MCF 10A (cell line): ENCODE measurements at regions of chr6 and their contacts with region 1.

Region 1: DNA sequence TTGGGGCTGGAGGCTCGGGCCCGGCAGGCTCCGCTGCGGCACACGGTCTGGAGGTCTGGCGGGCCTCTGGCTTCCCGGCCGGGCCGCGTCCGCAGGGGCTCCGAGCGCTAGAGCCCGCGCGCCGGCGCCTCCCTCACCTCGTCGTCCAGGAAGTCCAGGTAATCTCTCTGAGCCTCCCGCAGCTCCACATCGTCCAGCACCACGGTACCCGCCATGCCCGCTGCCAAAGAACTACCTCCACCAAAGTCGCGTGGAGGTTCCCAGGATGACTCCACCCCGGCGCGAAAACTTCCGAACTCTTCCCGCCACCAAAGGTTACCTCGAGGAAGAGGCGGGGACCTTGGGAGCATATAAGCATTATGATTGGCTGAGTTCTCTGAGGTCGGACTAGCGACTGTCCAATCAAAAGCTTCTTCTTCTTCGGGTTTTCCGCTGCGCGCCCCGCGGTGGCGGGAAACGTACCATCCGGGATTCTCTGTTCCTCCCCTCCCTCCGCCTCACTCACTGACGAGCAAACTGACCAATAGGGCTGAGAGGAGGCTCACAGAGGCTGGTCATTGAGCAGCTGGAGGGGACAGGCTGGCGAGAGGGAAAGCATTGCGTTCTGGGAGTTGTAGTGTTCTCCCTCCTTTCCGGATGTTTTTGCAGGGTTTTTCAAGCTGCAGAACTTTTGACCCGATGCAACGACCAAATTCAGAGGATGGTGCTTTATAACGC is at the start of gene MCM3:
- DNase-seq: peak; percentile 99
- H3K4me3 Mint-ChIP-seq: no peak within 1 kb of the TSS
- H3K27ac Mint-ChIP-seq: peak within 1 kb of the TSS; percentile 43
- H3K4me1 Mint-ChIP-seq: peaks cover 12% of the 10 kb centered on the region
- H3K27me3 Mint-ChIP-seq: no peaks in the 10 kb centered on the region
- CTCF ChIP-seq: no peak
- total RNA-seq, gene MCM3: 16.3 and 24.9 TPM in 2 replicates

Region 2: DNA sequence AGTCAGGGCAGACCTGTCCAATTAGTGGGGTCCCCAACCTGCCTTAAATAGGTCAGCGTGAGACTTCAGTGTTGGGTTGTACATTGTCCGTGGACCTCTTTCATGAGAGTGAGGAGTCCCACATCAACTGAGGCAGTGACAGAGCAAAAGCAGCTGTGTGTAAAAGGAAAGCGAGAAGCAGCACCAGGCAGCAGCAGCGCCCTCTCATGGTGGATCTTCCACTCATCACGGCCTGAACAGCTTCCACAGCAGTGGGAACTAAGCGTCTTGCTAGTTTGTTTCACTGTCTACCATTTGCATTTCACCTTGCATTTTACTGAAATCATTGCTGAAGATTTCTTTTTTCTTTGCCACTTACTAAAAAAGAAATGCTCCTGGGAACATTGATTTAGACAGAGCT is 531.0 kb before region 1 on chr6:
- CTCF ChIA-PET with region 1: no interaction called
- POLR2A ChIA-PET with region 1: no interaction called
- intact Hi-C with region 1: no loop called
- DNase-seq: peak; percentile 39
- H3K4me3 Mint-ChIP-seq: no peak overlapping the region
- H3K27ac Mint-ChIP-seq: no peak overlapping the region
- H3K4me1 Mint-ChIP-seq: no peaks in the 10 kb centered on the region
- H3K27me3 Mint-ChIP-seq: no peaks in the 10 kb centered on the region
- CTCF ChIP-seq: peak; percentile 28

Region 3: DNA sequence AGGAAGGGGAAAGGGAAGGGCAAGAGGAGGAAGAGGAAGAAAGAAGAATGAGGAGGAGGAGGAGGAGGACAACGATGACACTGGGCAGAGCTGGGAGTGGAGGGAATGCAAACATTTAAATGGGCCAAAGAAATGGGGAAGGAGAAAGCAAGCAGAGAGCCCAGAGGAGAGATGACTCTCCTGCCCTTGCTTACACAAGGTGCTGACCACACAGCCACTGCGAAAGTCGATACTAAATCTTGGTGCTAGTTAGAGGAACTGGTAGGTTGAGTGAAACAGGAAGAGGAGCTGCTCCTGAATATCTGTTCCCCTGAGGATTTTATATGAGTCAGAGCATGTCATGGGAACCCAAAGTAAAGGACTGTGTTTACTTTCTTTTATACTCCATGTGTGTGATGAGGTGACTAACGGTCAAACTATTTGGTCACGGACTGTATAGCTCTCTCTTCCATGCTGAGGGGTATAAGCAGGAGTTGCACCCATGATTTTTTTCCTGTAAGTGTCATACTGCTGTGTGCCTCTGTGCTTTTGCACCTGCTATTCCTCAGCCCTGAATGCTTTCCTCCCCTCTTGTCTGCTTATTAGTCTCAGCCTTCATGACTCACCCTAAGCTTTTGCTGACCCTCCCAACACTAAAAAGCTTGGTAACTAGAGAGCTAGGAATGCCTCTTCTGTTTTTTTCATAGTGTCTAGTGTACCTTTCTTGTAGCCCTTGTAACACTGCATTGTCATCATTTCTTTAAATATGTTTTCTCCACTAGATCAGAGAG is 67.8 kb after region 1 on chr6:
- CTCF ChIA-PET with region 1: interaction called, 4 read pairs
- POLR2A ChIA-PET with region 1: interaction called, 21 read pairs
- intact Hi-C with region 1: loop called (anchors 2 kb)
- DNase-seq: peak; percentile 95
- H3K4me3 Mint-ChIP-seq: peak overlapping the region; percentile 58
- H3K27ac Mint-ChIP-seq: peak overlapping the region; percentile 97
- H3K4me1 Mint-ChIP-seq: peaks cover 16% of the 10 kb centered on the region
- H3K27me3 Mint-ChIP-seq: no peaks in the 10 kb centered on the region
- CTCF ChIP-seq: no peak

Region 4: DNA sequence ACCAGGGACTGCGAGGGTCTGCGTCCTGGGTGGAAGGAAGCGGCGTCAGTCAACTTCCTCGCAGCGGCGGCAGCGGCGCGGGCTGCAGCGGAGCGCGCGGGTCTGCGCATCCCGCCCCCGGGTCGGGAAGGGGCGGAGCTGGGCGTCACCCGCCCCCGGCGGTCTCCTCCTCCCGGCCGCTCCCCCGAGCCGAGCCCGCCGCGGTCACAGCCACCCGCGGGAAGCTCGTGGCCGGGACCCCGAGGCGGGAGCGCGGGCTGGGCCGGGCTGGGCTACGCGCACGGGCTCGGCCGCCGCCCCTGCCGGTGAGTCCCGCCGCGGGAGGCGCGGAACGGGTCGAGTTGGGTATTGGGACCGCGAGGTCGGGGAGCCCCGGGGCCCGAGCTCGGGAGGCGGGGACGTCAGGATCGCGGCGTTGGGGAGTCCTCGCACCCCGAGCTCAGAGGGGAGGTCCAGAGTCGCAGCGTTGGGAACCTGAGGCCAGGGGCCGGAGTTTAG is 77.4 kb after region 1 on chr6 and contains the start of gene PAQR8:
- CTCF ChIA-PET with region 1: interaction called, 12 read pairs
- POLR2A ChIA-PET with region 1: interaction called, 7 read pairs
- intact Hi-C with region 1: loop called (anchors 1 kb)
- DNase-seq: peak; percentile 23
- H3K4me3 Mint-ChIP-seq: peak within 1 kb of the TSS; percentile 96
- H3K27ac Mint-ChIP-seq: peak within 1 kb of the TSS; percentile 77
- H3K4me1 Mint-ChIP-seq: peaks cover 16% of the 10 kb centered on the region
- H3K27me3 Mint-ChIP-seq: no peaks in the 10 kb centered on the region
- CTCF ChIP-seq: no peak
- total RNA-seq, gene PAQR8: 1.8 and 1.9 TPM in 2 replicates

Region 5: DNA sequence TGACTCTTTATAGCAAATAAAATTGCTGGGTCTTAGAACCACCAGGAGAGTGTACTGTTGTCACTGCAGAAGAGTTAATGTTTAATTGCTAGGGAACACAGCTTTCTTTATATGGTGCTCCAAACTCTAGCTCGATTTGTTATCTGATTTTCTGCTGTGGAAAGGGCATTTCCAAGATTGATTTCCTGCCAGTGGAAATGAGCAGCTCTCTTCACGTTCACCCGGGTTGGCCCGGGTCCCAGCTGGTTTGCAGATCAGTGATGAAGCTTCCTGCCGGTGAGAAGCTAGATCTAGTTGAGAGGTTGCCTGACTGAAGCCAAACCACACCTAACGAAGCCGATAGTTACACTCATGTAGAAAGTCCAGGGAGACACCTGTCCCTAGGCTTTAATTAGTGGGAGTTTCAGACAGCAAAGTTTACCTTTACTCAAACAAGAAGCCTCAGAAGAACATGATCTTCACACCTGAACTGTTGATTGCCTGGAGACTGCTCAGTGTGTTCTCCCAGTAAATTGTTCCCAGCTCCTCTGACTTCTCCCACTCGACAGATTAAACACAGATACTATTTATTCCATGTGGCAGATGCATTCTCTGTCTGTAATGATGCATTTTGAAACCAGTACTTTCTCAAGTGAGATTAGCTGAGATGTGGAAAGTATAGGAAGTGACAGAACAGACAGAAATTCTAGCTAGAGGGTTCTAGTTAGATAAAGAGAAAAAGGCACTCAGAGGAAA is 105.2 kb after region 1 on chr6:
- CTCF ChIA-PET with region 1: interaction called, 19 read pairs
- POLR2A ChIA-PET with region 1: interaction called, 4 read pairs
- intact Hi-C with region 1: no loop called
- DNase-seq: peak; percentile 50
- H3K4me3 Mint-ChIP-seq: peak overlapping the region; percentile 25
- H3K27ac Mint-ChIP-seq: peak overlapping the region; percentile 76
- H3K4me1 Mint-ChIP-seq: peaks cover 21% of the 10 kb centered on the region
- H3K27me3 Mint-ChIP-seq: no peaks in the 10 kb centered on the region
- CTCF ChIP-seq: no peak

Region 6: GRCh38 chr6:52399511-52400312 is 115.1 kb after region 1 on chr6:
- CTCF ChIA-PET with region 1: interaction called, 137 read pairs
- POLR2A ChIA-PET with region 1: interaction called, 10 read pairs
- intact Hi-C with region 1: loop called (anchors 1 kb)
- DNase-seq: peak; percentile 70
- H3K4me3 Mint-ChIP-seq: no peak overlapping the region
- H3K27ac Mint-ChIP-seq: no peak overlapping the region
- H3K4me1 Mint-ChIP-seq: peaks cover 10% of the 10 kb centered on the region
- H3K27me3 Mint-ChIP-seq: no peaks in the 10 kb centered on the region
- CTCF ChIP-seq: peak; percentile 73

Region 7: DNA sequence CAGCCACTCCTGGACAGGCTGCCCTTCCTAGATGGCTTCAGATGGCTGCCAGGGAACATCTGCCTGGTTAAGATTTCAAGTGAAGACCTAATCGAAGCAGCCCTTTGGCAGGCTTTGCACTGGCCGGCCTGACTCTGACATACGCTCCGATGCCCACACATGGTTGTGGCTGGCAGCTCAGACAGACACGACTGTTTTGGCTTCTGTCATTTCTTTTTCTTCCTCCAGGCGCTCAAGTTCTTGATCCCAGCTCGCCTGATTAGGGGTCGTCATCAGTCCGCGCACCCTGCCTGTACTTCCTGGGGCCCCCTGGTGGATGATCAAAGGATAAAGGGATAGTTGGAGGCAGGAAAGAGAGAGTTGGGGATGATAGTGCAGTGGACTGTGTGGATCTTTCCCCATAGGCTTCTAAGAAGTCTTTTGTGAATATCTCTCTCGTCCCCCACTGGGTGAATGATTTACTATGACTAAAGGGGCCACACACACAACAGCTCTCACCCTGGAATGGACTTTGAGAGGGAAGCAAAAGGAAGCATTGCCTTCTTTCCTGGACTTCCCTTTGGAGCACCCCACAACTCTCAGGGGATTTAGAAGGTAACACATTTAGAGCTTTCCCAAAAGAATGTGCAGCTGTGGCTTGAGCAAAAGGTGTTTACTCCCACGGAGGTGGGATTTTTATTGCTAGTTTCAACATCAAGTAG is 313.7 kb after region 1 on chr6:
- CTCF ChIA-PET with region 1: no interaction called
- POLR2A ChIA-PET with region 1: interaction called, 4 read pairs
- intact Hi-C with region 1: loop called (anchors 10 kb)
- DNase-seq: peak; percentile 52
- H3K4me3 Mint-ChIP-seq: no peak overlapping the region
- H3K27ac Mint-ChIP-seq: no peak overlapping the region
- H3K4me1 Mint-ChIP-seq: peaks cover 22% of the 10 kb centered on the region
- H3K27me3 Mint-ChIP-seq: no peaks in the 10 kb centered on the region
- CTCF ChIP-seq: peak; percentile 39